Heart left ventricle (tissue), 16 donors: ENCODE measurements at regions of chr12 and their contacts with region 1.

Region 1: GRCh38 chr12:3885277-3886094 is 12.3 kb upstream of the PARP11 start:
- DNase-seq: peak in 1 of 5 donors; percentile 26
- ATAC-seq: peak in 2 of 4 donors; percentile 34 to 56
- H3K4me3 ChIP-seq: peak overlapping the region in 9 of 12 donors; percentile 20 to 56 (median 45)
- H3K27ac ChIP-seq: peak overlapping the region in 11 of 12 donors; percentile 17 to 72 (median 61)
- H3K4me1 ChIP-seq: peaks cover 0 to 11% (median 0%) of the 10 kb centered on the region in 12 donors
- H3K27me3 ChIP-seq: peaks cover 0 to 16% (median 0%) of the 10 kb centered on the region in 9 donors
- CTCF ChIP-seq: peak; percentile 59 to 89 (median 80)
- POLR2A ChIP-seq: no peak

Region 2: DNA sequence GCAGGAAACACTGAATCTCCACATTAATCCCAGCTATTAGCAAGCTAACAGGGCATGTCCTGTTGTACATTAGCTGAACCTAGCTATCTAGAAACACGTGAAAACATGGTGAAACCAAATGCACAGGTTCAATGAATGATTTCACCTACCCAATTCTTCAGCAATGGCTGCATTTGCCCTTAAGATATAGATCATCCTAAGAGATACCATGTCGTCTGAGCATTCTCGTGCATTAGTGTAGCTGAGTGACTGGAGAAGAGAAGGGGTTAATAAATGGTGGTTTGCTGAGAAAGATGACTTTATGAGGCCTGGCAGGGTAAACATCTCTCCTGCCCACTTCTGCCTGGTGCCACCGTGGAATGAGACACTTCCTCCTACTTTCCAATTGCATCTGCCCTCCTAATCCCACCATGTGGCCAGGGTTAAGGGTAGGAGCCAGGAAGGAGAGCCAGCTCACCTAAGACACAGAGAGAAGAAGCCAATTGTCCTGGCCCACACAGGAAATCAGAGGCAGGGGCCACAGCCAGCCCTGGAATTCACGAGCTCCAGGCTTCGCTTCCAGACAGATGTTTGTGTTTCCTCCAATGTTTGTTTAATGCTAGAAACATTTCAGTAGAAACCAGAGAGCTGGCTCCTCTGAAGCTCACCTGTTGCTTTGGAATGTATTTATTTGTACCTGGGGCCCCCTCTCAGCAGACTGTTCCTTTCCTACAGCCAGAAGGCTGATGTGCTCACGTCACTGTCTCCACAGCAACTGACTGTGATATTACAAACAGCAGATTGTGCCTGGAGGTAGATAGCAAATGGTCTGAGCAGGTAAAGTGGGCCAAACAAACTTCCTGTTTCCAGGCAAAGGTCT is 113.7 kb after region 1 on chr12:
- intact Hi-C with region 1: loop called in 2 of 10 experiments (anchors 5 kb)
- DNase-seq: no peak
- ATAC-seq: no peak
- H3K4me3 ChIP-seq: no peak overlapping the region
- H3K27ac ChIP-seq: no peak overlapping the region
- H3K4me1 ChIP-seq: no peaks in the 10 kb centered on the region
- H3K27me3 ChIP-seq: peaks cover 0 to 13% (median 0%) of the 10 kb centered on the region in 9 donors
- CTCF ChIP-seq: no peak
- POLR2A ChIP-seq: no peak

Region 3: GRCh38 chr12:4107436-4107878 is 222.0 kb after region 1 on chr12:
- intact Hi-C with region 1: loop called in 1 of 10 experiments (anchors 10 kb)
- DNase-seq: peak in 2 of 5 donors; percentile 27 to 51
- ATAC-seq: peak in 3 of 4 donors; percentile 55 to 71 (median 70)
- H3K4me3 ChIP-seq: no peak overlapping the region
- H3K27ac ChIP-seq: no peak overlapping the region
- H3K4me1 ChIP-seq: peaks cover 0 to 11% (median 0%) of the 10 kb centered on the region in 12 donors
- H3K27me3 ChIP-seq: no peaks in the 10 kb centered on the region
- CTCF ChIP-seq: peak; percentile 20 to 74 (median 50)
- POLR2A ChIP-seq: no peak

Region 4: DNA sequence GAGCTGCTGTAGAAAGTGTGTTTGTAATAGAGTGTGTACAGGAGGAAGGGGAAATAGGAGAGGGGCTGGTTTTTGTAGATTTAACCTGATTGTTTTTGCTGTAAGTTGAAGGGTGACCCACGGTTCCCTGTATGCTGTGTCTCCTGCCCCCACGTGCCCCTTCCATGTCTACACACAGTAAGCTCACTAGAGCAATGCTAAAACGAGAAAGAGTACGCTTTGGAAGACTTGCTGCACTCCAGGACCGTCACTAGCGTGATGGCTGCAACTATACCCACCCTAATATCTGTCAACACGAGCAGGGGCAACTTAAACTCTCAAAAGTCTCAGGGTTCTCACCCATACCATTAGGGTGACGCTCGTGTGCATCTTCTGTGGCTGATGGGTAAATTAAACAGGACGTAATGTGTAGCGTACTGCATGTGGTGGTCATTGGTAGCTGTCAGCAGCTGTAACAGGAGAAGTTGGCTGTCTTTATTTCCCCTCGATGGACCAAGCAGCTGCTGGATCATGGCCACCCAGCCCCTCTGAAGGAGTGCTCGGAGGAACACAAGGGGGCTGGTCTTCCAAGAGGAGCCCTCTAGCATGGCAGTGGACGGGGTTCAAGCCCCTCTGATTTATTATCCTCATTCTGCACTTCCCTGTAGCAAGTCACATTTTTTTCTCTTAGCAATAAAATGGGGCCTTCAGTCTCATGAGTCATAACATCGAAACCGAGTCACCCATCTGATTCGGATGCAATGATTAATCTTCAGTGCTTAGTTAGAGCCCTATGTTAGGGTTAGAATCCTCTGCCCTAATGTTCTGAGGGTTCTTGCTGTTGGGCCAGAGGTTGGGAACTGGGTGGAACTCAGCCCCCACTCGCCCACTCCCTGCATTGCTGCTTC is 402.1 kb after region 1 on chr12:
- intact Hi-C with region 1: loop called in 2 of 10 experiments (anchors 5 to 10 kb)
- DNase-seq: no peak
- ATAC-seq: peak in 1 of 4 donors; percentile 8
- H3K4me3 ChIP-seq: no peak overlapping the region
- H3K27ac ChIP-seq: peak overlapping the region in 6 of 12 donors; percentile 9 to 74 (median 58)
- H3K4me1 ChIP-seq: peaks cover 2 to 92% (median 68%) of the 10 kb centered on the region in 12 donors
- H3K27me3 ChIP-seq: no peaks in the 10 kb centered on the region
- CTCF ChIP-seq: no peak
- POLR2A ChIP-seq: no peak

Region 5: DNA sequence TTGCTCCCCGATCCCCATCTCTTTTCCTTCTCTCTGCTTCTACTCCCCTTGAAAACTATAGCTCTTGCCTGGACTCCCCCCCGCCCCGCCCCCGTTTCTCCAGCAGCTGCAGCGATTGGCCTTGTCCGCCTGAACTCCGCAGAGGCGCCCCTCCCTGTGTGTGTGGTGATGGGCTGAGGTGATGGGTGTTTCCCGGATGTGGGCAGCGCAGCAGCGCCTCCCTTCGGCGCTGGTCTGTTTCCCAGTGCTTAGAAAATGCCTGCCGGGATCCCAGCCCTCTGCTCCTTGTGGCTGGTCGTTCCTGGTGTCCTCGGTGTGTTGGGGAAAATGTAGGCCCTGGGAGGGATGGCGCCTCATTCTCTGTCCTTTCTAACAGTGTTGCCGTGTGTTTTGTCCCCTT is 878.1 kb after region 1 on chr12:
- intact Hi-C with region 1: loop called in 1 of 10 experiments (anchors 5 kb)
- DNase-seq: no peak
- ATAC-seq: no peak
- H3K4me3 ChIP-seq: no peak overlapping the region
- H3K27ac ChIP-seq: no peak overlapping the region
- H3K4me1 ChIP-seq: peaks cover 0 to 27% (median 12%) of the 10 kb centered on the region in 12 donors
- H3K27me3 ChIP-seq: no peaks in the 10 kb centered on the region
- CTCF ChIP-seq: no peak
- POLR2A ChIP-seq: no peak